ENCODE measurements at regions of chr12 and their contacts with region 1.

Region 1: GRCh38 chr12:105820429-105821140 is 318.2 kb downstream of the NUAK1 start:
- DNase-seq: peak in 1 of 10 donors; percentile 28
- H3K4me3 ChIP-seq: no peak overlapping the region
- H3K27ac ChIP-seq: peak overlapping the region in 39 of 59 donors; percentile 2 to 83 (median 50)
- H3K27me3 ChIP-seq: no peaks in the 10 kb centered on the region
- CTCF ChIP-seq: no peak

Region 2: GRCh38 chr12:105741744-105742566 is 78.6 kb before region 1 on chr12:
- intact Hi-C with region 1: loop called in 1 of 2 experiments (anchors 2 kb)
- DNase-seq: peak in 4 of 10 donors; percentile 14 to 47 (median 34)
- H3K4me3 ChIP-seq: peak overlapping the region in 2 of 59 donors; percentile 11 to 16
- H3K27ac ChIP-seq: peak overlapping the region in 54 of 59 donors; percentile 0 to 90 (median 70)
- H3K27me3 ChIP-seq: no peaks in the 10 kb centered on the region
- CTCF ChIP-seq: no peak

Measured in dorsolateral prefrontal cortex (tissue), 120 donors.